Mammary epithelial cell (primary cell): ENCODE measurements at regions of chr3 and their contacts with region 1.

Region 1: DNA sequence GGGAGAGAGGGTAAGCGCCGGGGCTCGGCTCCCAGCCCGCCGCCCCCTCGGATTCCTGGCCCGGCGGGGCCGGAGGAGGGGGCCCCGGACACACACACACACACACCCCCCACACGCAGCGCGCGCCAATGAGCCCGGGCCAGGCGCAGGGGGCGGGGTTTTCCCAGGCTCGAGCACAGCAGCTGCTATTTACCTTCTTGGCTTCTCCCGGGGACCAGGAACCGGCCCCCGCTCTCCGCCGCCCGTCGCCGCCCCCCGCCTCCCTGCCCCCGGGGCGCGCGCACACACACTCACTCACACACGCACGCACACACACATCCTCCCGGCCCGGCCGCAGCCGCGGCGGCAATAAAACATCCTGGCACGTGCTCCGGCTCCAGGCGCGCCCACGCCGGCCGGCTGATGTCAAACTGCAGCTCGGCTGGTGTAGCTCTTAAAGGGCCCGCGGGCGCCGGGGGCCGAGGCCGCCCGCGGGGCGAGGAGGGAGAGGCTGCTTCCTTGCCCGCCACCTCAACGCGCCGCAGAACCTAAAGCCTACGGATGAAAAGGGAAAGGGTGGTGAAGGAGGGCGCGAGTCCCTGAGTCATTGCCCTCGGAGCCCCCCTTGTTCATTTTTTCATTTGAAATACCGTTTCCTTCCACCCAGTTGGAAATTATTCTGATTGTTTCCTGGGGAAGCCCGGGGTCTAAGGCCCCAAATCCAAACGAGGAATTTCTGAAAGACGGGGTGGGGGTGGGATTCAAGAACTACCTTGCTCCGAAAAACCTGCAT is 1.0 kb upstream of the HES1 start:
- DNase-seq: peak; percentile 99
- H3K4me3 ChIP-seq: peak overlapping the region; percentile 32 to 44 (median 42)
- H3K27ac ChIP-seq: peak overlapping the region; percentile 88
- H3K4me1 ChIP-seq: peaks cover 60% of the 10 kb centered on the region
- H3K27me3 ChIP-seq: no peaks in the 10 kb centered on the region
- CTCF ChIP-seq: no peak

Region 2: GRCh38 chr3:193207290-193208273 is 927.4 kb before region 1 on chr3:
- CTCF ChIA-PET with region 1: no interaction called
- dilution Hi-C with region 1: no loop called
- in situ Hi-C with region 1: no loop called
- intact Hi-C with region 1: no loop called
- DNase-seq: no peak
- H3K4me3 ChIP-seq: no peak overlapping the region
- H3K27ac ChIP-seq: no peak overlapping the region
- H3K4me1 ChIP-seq: no peaks in the 10 kb centered on the region
- H3K27me3 ChIP-seq: no peaks in the 10 kb centered on the region
- CTCF ChIP-seq: no peak

Region 3: GRCh38 chr3:193788189-193788991 is 346.6 kb before region 1 on chr3:
- CTCF ChIA-PET with region 1: no interaction called
- dilution Hi-C with region 1: no loop called
- in situ Hi-C with region 1: loop called (anchors 10 kb)
- intact Hi-C with region 1: no loop called
- DNase-seq: no peak
- H3K4me3 ChIP-seq: no peak overlapping the region
- H3K27ac ChIP-seq: no peak overlapping the region
- H3K4me1 ChIP-seq: peaks cover 11% of the 10 kb centered on the region
- H3K27me3 ChIP-seq: no peaks in the 10 kb centered on the region
- CTCF ChIP-seq: peak; percentile 34 to 47

Region 4: GRCh38 chr3:193872265-193872753 is 262.6 kb before region 1 on chr3:
- CTCF ChIA-PET with region 1: interaction called, 5 read pairs
- dilution Hi-C with region 1: no loop called
- in situ Hi-C with region 1: no loop called
- intact Hi-C with region 1: loop called (anchors 1 kb)
- DNase-seq: peak; percentile 100
- H3K4me3 ChIP-seq: no peak overlapping the region
- H3K27ac ChIP-seq: peak overlapping the region; percentile 94
- H3K4me1 ChIP-seq: peaks cover 71% of the 10 kb centered on the region
- H3K27me3 ChIP-seq: no peaks in the 10 kb centered on the region
- CTCF ChIP-seq: no peak

Region 5: DNA sequence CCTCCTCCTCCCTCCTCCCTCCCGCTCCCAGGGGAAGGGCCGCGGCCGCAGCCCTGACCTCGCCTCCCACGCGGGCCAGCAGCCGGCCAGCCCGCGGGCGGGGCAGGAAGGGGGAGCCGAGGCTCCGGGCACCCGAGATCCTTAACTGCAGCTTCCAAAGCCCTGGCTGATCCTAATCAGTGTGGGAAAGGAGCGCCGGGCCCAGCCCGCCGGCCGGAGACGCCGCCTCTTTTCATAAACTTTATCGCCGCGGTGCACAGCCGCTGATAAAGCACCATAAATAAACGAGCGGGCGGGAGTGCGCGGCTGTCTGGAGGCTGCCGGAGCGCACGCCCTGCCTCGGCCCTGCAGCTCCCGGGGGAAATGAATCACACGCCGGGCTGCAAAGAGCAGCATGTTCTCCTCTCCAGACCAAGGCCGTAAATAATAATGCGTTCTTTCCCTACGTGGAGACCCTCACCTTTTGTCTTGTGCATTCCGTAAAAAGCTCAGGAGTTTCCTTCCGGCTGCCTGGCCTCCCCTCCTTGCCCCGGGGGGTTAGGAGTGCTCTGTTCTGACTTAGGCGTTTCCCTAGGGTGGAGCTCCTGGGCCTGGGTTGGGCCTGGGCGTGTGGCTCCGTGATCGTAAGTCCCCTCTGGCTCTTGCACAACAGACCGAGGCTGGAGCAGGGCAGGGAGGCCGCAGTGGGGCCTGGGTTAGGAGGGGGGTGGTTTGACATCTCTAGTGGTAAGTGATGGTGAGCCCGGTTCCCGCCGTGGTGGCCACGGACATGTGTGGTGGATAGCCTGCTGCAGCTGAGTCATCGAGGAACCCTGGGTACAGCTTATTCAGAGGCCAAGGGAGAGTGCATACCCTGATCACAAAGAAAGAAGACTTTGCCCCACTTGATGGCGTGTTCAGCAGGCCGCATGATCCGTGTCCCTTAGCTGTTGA is 131.6 kb before region 1 on chr3:
- CTCF ChIA-PET with region 1: no interaction called
- dilution Hi-C with region 1: no loop called
- in situ Hi-C with region 1: no loop called
- intact Hi-C with region 1: loop called (anchors 1 kb)
- DNase-seq: peak; percentile 94
- H3K4me3 ChIP-seq: peak overlapping the region; percentile 29 to 41 (median 32)
- H3K27ac ChIP-seq: peak overlapping the region; percentile 75
- H3K4me1 ChIP-seq: peaks cover 25% of the 10 kb centered on the region
- H3K27me3 ChIP-seq: no peaks in the 10 kb centered on the region
- CTCF ChIP-seq: no peak

Region 6: GRCh38 chr3:194315088-194315964 is 180.4 kb after region 1 on chr3:
- CTCF ChIA-PET with region 1: interaction called, 3 read pairs
- dilution Hi-C with region 1: no loop called
- in situ Hi-C with region 1: loop called in 1 of 2 experiments (anchors 5 kb)
- intact Hi-C with region 1: loop called (anchors 1 kb)
- DNase-seq: peak; percentile 89
- H3K4me3 ChIP-seq: peak overlapping the region; percentile 26 to 51 (median 30)
- H3K27ac ChIP-seq: peak overlapping the region; percentile 63
- H3K4me1 ChIP-seq: peaks cover 16% of the 10 kb centered on the region
- H3K27me3 ChIP-seq: no peaks in the 10 kb centered on the region
- CTCF ChIP-seq: peak; percentile 73 to 92